Activated CD8-positive, alpha-beta memory T cell treated with anti-CD3 and anti-CD28 coated beads, Interleukin-2, amount 10 ng/mL, durations not matched to agents 7 days and 5 days (primary cell): ENCODE measurements at regions of chr1 and their contacts with region 1.

Region 1: GRCh38 chr1:31789259-31790065 is 25.3 kb upstream of the ADGRB2 start:
- DNase-seq: peak; percentile 98
- ATAC-seq: peak; percentile 82
- H3K4me3 Mint-ChIP-seq: peak overlapping the region; percentile 76
- H3K27ac Mint-ChIP-seq: peak overlapping the region; percentile 35
- H3K4me1 Mint-ChIP-seq: peaks cover 11% of the 10 kb centered on the region
- H3K27me3 Mint-ChIP-seq: no peaks in the 10 kb centered on the region

Region 2: GRCh38 chr1:31264790-31265386 is 524.6 kb before region 1 on chr1:
- CTCF ChIA-PET with region 1: no interaction called
- DNase-seq: no peak
- ATAC-seq: no peak
- H3K4me3 Mint-ChIP-seq: no peak overlapping the region
- H3K27ac Mint-ChIP-seq: no peak overlapping the region
- H3K4me1 Mint-ChIP-seq: no peaks in the 10 kb centered on the region
- H3K27me3 Mint-ChIP-seq: no peaks in the 10 kb centered on the region

Region 3: DNA sequence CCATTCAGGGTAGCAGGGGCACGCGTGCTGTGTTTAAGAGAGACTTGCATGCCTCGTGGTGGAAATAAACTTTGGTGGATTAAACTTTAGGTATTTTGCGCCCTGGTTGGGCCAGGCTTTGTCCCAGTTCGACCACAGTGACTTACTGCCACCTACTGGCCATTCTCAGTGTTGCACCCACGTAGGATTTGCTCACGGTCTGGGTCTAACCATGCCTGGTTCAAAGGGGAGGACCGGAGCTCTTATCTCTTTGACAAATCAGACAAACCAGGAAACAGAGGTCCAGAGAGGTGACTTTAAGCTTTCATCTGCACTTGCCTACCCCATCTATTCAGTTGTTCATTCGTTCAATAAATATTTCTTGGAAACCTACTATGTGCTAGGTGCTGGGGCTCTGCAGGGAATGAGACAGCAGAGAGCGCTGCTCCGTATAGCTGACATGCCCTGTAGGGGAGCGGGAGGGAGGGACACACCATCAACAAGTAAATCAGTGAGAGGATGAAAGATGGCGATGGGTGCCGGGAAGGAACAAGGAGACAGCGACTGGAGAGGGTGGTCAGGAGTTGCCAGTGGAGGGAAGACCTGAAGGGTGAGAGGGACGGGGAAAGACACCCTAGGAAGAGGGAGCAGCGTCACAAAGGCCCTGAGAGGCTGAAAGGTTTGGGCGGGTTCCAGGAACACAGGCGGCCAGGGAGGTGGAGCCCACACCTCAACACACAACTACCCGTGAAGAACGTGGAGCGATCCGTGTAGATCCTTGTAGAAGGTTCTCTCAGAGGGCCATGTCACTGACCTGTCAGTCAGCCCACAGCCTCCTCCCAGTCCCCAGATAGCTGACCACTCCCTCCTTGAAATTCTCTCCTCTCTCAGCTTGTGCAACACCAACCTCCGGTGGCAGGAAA is 240.3 kb before region 1 on chr1:
- CTCF ChIA-PET with region 1: interaction called, 16 read pairs
- DNase-seq: peak; percentile 92
- ATAC-seq: peak; percentile 89
- H3K4me3 Mint-ChIP-seq: peak overlapping the region; percentile 63
- H3K27ac Mint-ChIP-seq: peak overlapping the region; percentile 51
- H3K4me1 Mint-ChIP-seq: peaks cover 12% of the 10 kb centered on the region
- H3K27me3 Mint-ChIP-seq: peaks cover 16% of the 10 kb centered on the region

Region 4: DNA sequence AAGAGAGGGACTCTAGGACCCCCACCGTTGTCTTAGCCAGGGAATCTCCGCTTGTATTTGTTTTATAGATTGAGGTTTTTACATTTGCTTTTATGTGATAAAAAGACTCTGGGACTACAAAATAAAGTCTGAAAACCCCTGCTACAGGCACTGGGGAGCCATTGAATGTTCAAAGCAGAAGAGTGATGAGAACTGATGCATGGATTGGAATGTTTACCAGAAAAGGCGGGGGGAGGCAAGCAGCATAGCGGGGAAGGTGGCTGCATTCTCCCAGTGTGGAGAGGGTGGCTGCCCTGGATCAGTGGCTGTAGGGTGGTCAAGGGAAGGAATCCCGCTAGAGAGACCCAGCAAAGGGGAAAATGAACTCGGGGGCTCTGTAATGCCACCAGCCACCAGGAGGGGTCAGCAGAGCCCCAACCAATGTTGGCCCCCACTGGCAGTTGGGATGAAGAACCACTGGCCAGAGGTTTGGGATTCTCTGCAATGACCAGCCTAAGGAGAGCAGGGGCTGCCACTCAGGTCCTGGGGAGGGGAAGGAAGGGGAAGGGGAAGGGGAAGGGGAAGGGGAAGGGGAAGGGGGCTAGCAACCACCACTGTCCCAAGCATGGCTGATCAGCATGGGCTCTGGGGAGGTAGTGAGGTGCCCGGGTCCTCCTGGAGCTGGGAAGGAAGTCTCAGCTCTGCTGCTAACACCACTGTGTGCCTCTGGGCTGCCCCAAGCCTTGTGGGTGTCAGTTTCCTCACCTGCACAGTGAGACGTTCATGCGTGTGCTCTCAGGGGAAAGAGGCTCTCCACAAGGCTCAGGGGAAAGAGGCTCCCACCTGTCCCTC is 125.6 kb before region 1 on chr1:
- CTCF ChIA-PET with region 1: interaction called, 100 read pairs
- DNase-seq: peak; percentile 68
- ATAC-seq: peak; percentile 40
- H3K4me3 Mint-ChIP-seq: no peak overlapping the region
- H3K27ac Mint-ChIP-seq: no peak overlapping the region
- H3K4me1 Mint-ChIP-seq: no peaks in the 10 kb centered on the region
- H3K27me3 Mint-ChIP-seq: peaks cover 10% of the 10 kb centered on the region

Region 5: DNA sequence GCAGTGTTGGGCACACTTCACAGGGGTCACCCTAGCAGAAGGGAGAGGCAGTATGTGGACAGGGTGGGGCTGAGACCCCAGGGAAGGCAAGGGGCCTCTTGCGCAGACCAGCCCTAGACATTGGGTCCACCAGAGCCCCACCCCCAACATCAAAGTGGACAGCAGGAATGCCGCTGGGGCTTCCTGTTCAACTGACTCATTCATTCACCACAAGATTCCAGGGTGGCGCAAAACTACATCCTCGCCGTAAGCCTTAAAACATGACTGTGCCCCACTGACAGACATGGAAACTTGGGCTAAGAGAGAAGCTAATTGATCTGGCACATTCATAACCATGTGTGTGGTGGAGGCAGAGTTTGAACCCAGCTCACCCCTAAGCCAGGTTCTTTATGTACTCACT is 99.6 kb before region 1 on chr1:
- CTCF ChIA-PET with region 1: no interaction called
- DNase-seq: no peak
- ATAC-seq: no peak
- H3K4me3 Mint-ChIP-seq: no peak overlapping the region
- H3K27ac Mint-ChIP-seq: no peak overlapping the region
- H3K4me1 Mint-ChIP-seq: no peaks in the 10 kb centered on the region
- H3K27me3 Mint-ChIP-seq: peaks cover 10% of the 10 kb centered on the region

Region 6: DNA sequence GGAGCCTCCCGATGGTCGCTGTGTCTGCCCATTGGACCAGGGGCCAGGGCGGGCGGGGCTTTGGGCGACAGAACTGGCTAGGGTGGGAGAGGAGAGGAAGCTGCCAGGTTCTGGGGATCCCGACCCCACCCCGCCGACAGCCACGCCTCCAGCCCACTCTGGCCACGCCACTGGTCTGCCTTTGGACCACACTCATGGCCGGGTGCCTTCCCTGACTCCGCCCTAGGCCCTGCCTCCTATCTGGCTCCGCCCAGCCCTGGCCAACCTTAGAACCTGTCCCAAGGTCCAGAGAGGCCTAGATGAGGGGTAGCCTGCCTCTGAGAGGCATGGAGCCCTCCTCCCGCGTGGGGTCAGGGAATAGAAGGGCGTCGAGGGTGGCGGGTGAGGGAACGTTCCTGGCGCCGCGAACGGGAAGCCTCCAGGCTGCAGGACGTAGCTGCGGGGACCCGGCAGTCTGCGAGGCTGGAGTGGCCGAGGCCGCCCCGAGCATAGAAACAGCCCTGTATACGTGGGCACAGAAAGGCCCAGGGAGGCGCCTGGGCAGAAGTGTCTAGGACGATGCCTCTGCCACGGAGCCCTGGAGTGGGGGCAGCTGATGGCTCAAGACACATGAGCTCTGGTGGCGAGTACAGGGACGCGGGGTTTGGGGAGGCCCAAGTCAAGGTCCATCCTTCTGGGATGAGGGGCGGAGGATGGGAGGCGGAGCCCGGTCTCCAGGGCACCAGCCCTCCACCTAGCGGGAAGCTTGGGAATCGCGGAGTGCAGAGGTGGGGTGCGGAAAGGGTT is 74.2 kb before region 1 on chr1:
- CTCF ChIA-PET with region 1: interaction called, 60 read pairs
- DNase-seq: peak; percentile 54
- ATAC-seq: peak; percentile 71
- H3K4me3 Mint-ChIP-seq: peak overlapping the region; percentile 48
- H3K27ac Mint-ChIP-seq: no peak overlapping the region
- H3K4me1 Mint-ChIP-seq: peaks cover 11% of the 10 kb centered on the region
- H3K27me3 Mint-ChIP-seq: peaks cover 73% of the 10 kb centered on the region

Region 7: DNA sequence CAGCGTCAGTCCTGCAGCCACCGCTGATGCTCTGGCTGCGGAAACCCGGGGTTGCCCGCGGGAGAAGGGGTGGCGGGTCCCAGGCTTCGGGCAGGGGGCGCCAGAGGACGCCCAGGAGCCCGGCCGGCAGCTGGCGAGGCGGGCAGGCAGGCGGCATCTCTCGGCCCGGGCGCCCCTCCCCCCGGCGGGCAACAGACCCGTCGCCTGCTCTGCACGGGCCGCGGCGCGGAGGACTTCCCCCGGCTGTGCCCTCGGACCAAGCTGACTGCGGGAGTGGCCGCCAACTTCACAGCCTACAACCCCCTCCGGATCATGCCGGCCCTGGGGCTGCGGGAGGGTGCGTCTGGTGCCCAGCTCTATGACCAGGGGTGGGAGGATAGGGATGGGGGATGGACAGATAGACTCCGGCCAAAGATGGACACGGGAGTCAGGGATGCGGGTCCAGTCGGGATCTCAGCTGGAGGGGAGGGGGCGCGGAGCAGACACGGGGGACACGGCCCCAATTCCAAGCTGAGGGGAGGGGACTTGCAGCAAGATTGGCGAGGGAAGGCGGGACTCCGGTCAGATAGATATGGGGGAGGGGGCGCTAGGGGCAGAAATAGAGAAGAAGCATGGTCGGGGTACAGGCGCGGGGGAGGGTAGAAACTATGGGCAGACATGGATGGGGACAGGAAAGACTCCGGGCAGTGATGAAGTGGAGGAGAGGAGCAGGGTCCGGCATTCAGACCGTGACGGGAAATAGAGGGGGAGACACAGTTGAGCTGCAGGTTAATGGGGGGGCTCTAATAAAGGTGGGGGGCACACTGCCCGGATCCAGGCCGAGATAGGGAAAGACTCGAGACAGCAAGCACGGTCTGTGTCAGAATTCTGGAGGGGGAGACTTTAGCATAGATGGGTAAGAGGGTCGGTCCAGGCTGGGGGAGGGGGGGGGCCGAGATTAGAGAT is 26.5 kb before region 1 on chr1:
- CTCF ChIA-PET with region 1: interaction called, 52 read pairs
- DNase-seq: peak; percentile 59
- ATAC-seq: peak; percentile 48
- H3K4me3 Mint-ChIP-seq: peak overlapping the region; percentile 52
- H3K27ac Mint-ChIP-seq: no peak overlapping the region
- H3K4me1 Mint-ChIP-seq: peaks cover 19% of the 10 kb centered on the region
- H3K27me3 Mint-ChIP-seq: peaks cover 53% of the 10 kb centered on the region

Region 8: GRCh38 chr1:31938174-31938950 is 148.9 kb after region 1 on chr1 and contains the start of gene PTP4A2:
- CTCF ChIA-PET with region 1: interaction called, 10 read pairs
- DNase-seq: peak; percentile 94
- ATAC-seq: peak; percentile 71
- H3K4me3 Mint-ChIP-seq: peak within 1 kb of the TSS; percentile 99
- H3K27ac Mint-ChIP-seq: peak within 1 kb of the TSS; percentile 98
- H3K4me1 Mint-ChIP-seq: peaks cover 69% of the 10 kb centered on the region
- H3K27me3 Mint-ChIP-seq: no peaks in the 10 kb centered on the region
- total RNA-seq, gene PTP4A2: 401 to 507 TPM

Region 9: GRCh38 chr1:32636914-32637645 is 847.6 kb after region 1 on chr1:
- CTCF ChIA-PET with region 1: no interaction called
- DNase-seq: no peak
- ATAC-seq: no peak
- H3K4me3 Mint-ChIP-seq: no peak overlapping the region
- H3K27ac Mint-ChIP-seq: no peak overlapping the region
- H3K4me1 Mint-ChIP-seq: peaks cover 11% of the 10 kb centered on the region
- H3K27me3 Mint-ChIP-seq: no peaks in the 10 kb centered on the region